Tibial artery (tissue), 4 donors: ENCODE measurements at regions of chr7 and their contacts with region 1.

Region 1: DNA sequence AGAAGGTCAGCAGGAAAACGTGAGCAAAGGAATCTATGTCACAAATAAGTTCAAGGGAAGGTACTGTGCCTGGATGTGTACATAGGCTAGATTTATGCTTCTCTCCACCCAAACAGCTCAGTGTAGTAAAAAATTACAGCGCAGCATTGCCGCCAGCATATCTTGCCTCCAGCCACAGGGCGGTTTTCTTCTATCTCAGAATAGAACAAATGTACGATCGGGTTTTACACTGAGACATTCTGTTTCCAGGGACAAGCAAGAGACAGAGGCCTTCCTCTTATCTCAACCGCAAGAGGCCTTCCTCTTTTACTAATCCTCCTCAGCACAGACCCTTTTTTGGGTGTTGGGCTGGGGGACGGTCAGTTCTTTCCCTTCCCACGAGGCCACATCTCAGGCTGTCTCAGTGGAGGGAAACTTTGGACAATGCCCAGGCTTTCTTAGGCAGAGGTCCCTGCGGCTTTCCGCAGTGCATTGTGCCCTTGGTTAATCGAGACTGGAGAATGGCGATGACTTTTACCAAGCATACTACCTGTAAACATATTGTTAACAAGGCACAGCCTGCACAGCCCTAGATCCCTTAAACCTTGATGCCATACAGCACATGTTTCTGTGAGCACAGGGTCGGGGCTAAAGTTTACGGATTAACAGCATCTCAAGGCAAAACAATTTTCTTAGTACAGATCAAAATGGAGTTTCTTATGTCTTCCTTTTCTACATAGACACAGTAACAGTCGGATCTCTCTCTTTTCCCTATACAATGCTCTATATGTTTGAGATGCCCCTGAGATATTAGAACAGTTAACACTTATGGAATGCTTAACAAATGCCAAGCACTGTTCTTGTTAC is 11.6 kb upstream of the ABHD11 start:
- DNase-seq: no peak
- H3K4me3 ChIP-seq: no peak overlapping the region
- H3K27ac ChIP-seq: no peak overlapping the region
- H3K4me1 ChIP-seq: peaks cover 0 to 3% (median 0%) of the 10 kb centered on the region in 4 donors
- H3K27me3 ChIP-seq: no peaks in the 10 kb centered on the region
- CTCF ChIP-seq: no peak

Region 2: GRCh38 chr7:73342645-73343044 is 407.5 kb before region 1 on chr7:
- intact Hi-C with region 1: no loop called
- DNase-seq: no peak
- H3K4me3 ChIP-seq: peak overlapping the region in 1 of 2 donors; percentile 13
- H3K27ac ChIP-seq: no peak overlapping the region
- H3K4me1 ChIP-seq: peaks cover 0 to 5% (median 2%) of the 10 kb centered on the region in 4 donors
- H3K27me3 ChIP-seq: peaks cover 0 to 8% of the 10 kb centered on the region in 2 donors
- CTCF ChIP-seq: peak; percentile 33 to 47

Region 3: GRCh38 chr7:73565675-73566340 is 184.3 kb before region 1 on chr7:
- intact Hi-C with region 1: no loop called
- DNase-seq: no peak
- H3K4me3 ChIP-seq: peak overlapping the region in 1 of 2 donors; percentile 19
- H3K27ac ChIP-seq: no peak overlapping the region
- H3K4me1 ChIP-seq: peaks cover 0 to 3% (median 0%) of the 10 kb centered on the region in 4 donors
- H3K27me3 ChIP-seq: no peaks in the 10 kb centered on the region
- CTCF ChIP-seq: no peak

Region 4: GRCh38 chr7:73842247-73842895 is 92.2 kb after region 1 on chr7 and contains the start of gene METTL27:
- intact Hi-C with region 1: loop called (anchors 10 kb)
- DNase-seq: peak; percentile 95 to 97
- H3K4me3 ChIP-seq: peak within 1 kb of the TSS; percentile 73 to 85
- H3K27ac ChIP-seq: peak within 1 kb of the TSS; percentile 77 to 81
- H3K4me1 ChIP-seq: peaks cover 0 to 20% (median 10%) of the 10 kb centered on the region in 4 donors
- H3K27me3 ChIP-seq: peaks cover 0 to 3% of the 10 kb centered on the region in 2 donors
- CTCF ChIP-seq: no peak